Panc1 (cell line): ENCODE measurements at regions of chr2 and their contacts with region 1.

Region 1: GRCh38 chr2:128178650-128179460 is 87.9 kb downstream of the UGGT1 start:
- DNase-seq: no peak
- ATAC-seq: peak; percentile 85
- H3K4me3 ChIP-seq: no peak overlapping the region
- H3K27ac ChIP-seq: no peak overlapping the region
- H3K4me1 ChIP-seq: no peaks in the 10 kb centered on the region
- H3K27me3 ChIP-seq: no peaks in the 10 kb centered on the region
- CTCF ChIP-seq: peak; percentile 84

Region 2: DNA sequence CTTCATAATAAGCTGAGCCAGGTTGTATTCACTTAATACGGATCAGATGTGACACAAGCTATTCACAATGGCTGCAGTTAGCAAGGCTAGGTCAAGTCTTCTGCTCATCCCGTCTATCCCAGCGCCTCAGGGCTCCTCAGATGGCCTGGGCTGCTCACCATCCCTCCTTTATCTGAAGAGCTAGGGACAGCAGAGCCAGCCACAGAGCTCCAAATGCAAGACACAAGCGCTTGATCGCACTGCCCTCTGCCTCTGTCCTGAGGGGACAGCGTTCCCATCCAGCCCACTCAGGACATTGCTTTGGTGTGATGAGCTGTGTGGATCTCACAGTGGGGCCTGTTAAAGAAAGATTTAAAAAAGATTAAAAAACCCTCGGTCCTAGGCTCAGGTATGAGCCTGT is 394.3 kb after region 1 on chr2:
- CTCF ChIA-PET with region 1: interaction called, 11 read pairs
- POLR2A ChIA-PET with region 1: no interaction called
- in situ Hi-C with region 1: no loop called
- intact Hi-C with region 1: no loop called
- DNase-seq: no peak
- ATAC-seq: no peak
- H3K4me3 ChIP-seq: no peak overlapping the region
- H3K27ac ChIP-seq: no peak overlapping the region
- H3K4me1 ChIP-seq: no peaks in the 10 kb centered on the region
- H3K27me3 ChIP-seq: peaks cover 9% of the 10 kb centered on the region
- CTCF ChIP-seq: no peak